ENCODE measurements at regions of chr12 and their contacts with region 1.

Region 1: DNA sequence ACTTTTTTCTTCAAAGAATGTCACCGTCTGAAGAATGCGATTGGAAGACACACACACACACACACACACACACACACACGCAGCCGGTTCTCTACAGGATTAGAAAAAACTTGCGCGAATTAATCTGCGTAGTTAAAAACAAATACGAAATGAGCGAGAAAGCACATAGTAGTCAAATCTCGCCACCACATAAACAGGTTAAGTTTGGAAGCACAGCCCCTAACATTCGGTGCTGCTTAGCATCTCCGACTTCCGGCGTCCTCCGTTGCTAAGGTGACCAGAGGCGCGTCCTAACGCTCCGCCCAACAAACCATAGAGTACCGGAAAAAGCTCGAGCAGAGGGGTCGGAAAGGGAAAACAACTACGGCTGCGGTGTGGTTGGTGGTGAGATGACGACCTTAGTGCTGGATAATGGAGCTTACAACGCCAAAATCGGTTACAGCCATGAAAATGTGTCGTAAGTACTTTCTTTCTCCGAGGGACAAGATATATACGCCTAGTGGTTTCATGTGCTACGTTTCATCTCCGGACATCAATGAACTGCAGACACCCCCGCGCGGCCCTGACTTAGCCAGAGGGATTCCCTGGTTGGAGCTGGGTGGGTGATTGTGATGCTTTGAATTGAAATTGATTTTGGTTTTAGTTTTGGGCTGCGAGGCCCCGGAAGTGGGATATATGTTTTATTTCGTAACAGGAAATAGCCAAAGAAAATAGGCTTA is at the start of gene ACTR6:
- DNase-seq: peak; percentile 98
- H3K4me3 ChIP-seq: peak within 1 kb of the TSS; percentile 58 to 89 (median 74)
- H3K27ac ChIP-seq: peak within 1 kb of the TSS; percentile 57 to 92 (median 88)
- H3K4me1 ChIP-seq: peaks cover 13 to 60% (median 35%) of the 10 kb centered on the region in 6 donors
- H3K27me3 ChIP-seq: no peaks in the 10 kb centered on the region
- CTCF ChIP-seq: peak in 8 of 11 experiments; percentile 5 to 44 (median 24)
- POLR2A ChIP-seq: peak in 1 of 3 donors; percentile 37
- total RNA-seq, gene ACTR6: 20.1 to 32.4 (median 25.1) TPM

Region 2: GRCh38 chr12:99746538-99746937 is 454.1 kb before region 1 on chr12:
- intact Hi-C with region 1: no loop called
- DNase-seq: no peak
- H3K4me3 ChIP-seq: no peak overlapping the region
- H3K27ac ChIP-seq: no peak overlapping the region
- H3K4me1 ChIP-seq: no peaks in the 10 kb centered on the region
- H3K27me3 ChIP-seq: no peaks in the 10 kb centered on the region
- CTCF ChIP-seq: no peak
- POLR2A ChIP-seq: no peak

Region 3: DNA sequence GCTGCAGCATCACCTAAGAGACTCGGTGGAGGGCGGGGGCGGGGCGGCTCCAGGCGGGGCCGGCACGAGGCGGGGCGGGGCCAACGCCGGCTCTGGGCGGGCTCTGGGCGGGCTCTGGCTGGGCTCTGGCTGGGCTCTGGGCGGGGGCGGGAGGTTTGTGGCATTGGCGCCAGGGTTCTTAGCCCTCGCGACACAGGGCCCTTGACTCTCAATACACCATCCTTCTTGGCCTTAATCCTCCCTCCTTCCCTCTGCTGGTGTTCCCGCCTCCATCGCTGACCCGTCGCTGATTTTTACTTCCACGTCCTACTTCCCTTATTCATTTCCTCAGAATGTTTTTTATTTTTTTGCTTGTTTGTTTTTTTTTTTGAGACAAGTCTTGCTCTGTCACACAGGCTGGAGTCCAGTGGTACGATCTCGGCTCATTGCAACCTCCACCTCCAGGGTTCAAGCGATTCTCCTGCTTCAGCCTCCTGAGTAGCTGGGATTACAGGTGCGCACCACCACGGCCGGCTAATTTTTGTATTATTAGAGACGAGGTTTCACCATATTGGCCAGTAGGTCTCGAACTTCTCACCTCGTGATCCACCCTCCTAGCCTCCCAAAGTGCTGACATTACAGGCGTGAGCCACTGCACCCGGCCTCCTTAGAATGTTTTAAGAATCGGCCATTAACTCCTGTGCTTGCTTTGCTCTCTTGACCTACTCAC is 57.6 kb before region 1 on chr12 and contains the start of gene BLTP3B:
- intact Hi-C with region 1: loop called (anchors 5 kb)
- DNase-seq: peak; percentile 98
- H3K4me3 ChIP-seq: peak within 1 kb of the TSS; percentile 81 to 99 (median 92)
- H3K27ac ChIP-seq: peak within 1 kb of the TSS; percentile 94 to 98 (median 97)
- H3K4me1 ChIP-seq: peaks cover 15 to 58% (median 47%) of the 10 kb centered on the region in 6 donors
- H3K27me3 ChIP-seq: no peaks in the 10 kb centered on the region
- CTCF ChIP-seq: peak in 1 of 11 experiments; percentile 21
- POLR2A ChIP-seq: no peak
- total RNA-seq, gene BLTP3B: 29.5 to 42.5 (median 36.3) TPM

Measured in spleen (tissue), 13 donors.